Ascending aorta (tissue), 2 donors: ENCODE measurements at regions of chrX and their contacts with region 1.

Region 1: GRCh38 chrX:13898083-13898482 is 81.2 kb upstream of the GPM6B start:
- DNase-seq: peak in 1 of 2 donors; percentile 69
- H3K4me3 ChIP-seq: no peak overlapping the region
- H3K27ac ChIP-seq: peak overlapping the region in 1 of 2 donors; percentile 23
- H3K4me1 ChIP-seq: peaks cover 0 to 33% of the 10 kb centered on the region in 2 donors
- H3K27me3 ChIP-seq: no peaks in the 10 kb centered on the region
- CTCF ChIP-seq: peak in 2 of 3 experiments; percentile 29 to 32

Region 2: DNA sequence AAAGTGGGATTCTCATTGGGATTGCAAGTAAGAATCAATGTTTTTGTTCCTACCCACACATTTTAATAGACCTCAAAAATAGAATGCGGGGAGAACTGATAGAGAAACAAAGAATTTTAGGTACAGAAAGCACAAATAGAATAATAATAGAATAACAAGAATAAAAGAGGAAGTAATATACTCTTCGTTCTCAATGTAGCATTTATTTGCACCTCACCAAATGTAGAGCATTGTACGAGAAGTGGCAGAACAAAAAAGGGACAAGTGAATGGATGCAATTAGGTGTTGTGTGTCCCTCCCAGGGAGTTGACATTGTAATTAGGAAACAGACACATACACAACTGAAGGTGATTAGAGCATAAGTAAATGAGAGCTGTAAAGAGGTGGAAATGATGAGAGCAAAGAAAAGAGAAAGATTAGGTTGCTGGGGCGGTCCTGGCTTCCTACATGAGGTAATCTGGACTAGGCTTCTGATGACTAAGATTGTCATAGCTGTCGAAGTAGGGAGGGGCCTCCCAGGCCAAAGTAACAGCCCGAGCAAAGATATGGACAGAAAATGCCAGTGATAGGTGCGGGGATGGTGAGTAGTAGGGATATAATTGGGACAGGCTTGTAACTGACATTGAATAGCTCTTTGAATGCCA is 198.8 kb before region 1 on chrX:
- intact Hi-C with region 1: no loop called
- DNase-seq: no peak
- H3K4me3 ChIP-seq: no peak overlapping the region
- H3K27ac ChIP-seq: peak overlapping the region; percentile 30 to 31
- H3K4me1 ChIP-seq: peaks cover 0 to 17% of the 10 kb centered on the region in 2 donors
- H3K27me3 ChIP-seq: no peaks in the 10 kb centered on the region
- CTCF ChIP-seq: no peak

Region 3: DNA sequence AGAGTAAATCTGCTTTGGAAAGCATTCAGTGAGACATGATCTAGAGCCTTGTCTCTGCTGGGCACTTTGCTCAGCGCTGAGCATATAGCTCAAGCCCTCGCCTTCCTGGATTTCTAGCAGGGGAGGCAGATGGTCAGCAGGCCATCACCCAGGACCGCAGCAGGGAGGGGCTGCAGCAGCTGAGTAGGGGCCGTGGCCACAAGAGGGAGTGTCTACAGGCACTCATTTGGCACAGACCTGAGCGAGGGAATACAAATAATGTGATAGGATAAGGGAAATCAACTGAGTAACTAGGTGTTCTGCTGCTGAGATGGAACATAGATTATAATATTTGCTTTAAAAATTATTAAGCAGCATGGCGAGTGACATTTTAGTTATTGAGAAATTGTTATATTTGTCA is 133.3 kb before region 1 on chrX:
- intact Hi-C with region 1: loop called (anchors 10 kb)
- DNase-seq: no peak
- H3K4me3 ChIP-seq: no peak overlapping the region
- H3K27ac ChIP-seq: peak overlapping the region in 1 of 2 donors; percentile 22
- H3K4me1 ChIP-seq: peaks cover 0 to 5% of the 10 kb centered on the region in 2 donors
- H3K27me3 ChIP-seq: no peaks in the 10 kb centered on the region
- CTCF ChIP-seq: no peak

Region 4: GRCh38 chrX:13791559-13791958 is 106.5 kb before region 1 on chrX:
- intact Hi-C with region 1: loop called (anchors 5 kb)
- DNase-seq: no peak
- H3K4me3 ChIP-seq: no peak overlapping the region
- H3K27ac ChIP-seq: peak overlapping the region in 1 of 2 donors; percentile 71
- H3K4me1 ChIP-seq: peaks cover 0 to 6% of the 10 kb centered on the region in 2 donors
- H3K27me3 ChIP-seq: no peaks in the 10 kb centered on the region
- CTCF ChIP-seq: no peak

Region 5: GRCh38 chrX:13851996-13852695 is 45.9 kb before region 1 on chrX:
- intact Hi-C with region 1: no loop called
- DNase-seq: no peak
- H3K4me3 ChIP-seq: no peak overlapping the region
- H3K27ac ChIP-seq: no peak overlapping the region
- H3K4me1 ChIP-seq: no peaks in the 10 kb centered on the region
- H3K27me3 ChIP-seq: no peaks in the 10 kb centered on the region
- CTCF ChIP-seq: no peak

Region 6: GRCh38 chrX:13938051-13938828 is 40.2 kb after region 1 on chrX:
- intact Hi-C with region 1: loop called (anchors 5 kb)
- DNase-seq: no peak
- H3K4me3 ChIP-seq: peak overlapping the region; percentile 63 to 68
- H3K27ac ChIP-seq: no peak overlapping the region
- H3K4me1 ChIP-seq: no peaks in the 10 kb centered on the region
- H3K27me3 ChIP-seq: peaks cover 9% of the 10 kb centered on the region
- CTCF ChIP-seq: no peak